Dorsolateral prefrontal cortex (tissue), 120 donors: ENCODE measurements at regions of chr6 and their contacts with region 1.

Region 1: DNA sequence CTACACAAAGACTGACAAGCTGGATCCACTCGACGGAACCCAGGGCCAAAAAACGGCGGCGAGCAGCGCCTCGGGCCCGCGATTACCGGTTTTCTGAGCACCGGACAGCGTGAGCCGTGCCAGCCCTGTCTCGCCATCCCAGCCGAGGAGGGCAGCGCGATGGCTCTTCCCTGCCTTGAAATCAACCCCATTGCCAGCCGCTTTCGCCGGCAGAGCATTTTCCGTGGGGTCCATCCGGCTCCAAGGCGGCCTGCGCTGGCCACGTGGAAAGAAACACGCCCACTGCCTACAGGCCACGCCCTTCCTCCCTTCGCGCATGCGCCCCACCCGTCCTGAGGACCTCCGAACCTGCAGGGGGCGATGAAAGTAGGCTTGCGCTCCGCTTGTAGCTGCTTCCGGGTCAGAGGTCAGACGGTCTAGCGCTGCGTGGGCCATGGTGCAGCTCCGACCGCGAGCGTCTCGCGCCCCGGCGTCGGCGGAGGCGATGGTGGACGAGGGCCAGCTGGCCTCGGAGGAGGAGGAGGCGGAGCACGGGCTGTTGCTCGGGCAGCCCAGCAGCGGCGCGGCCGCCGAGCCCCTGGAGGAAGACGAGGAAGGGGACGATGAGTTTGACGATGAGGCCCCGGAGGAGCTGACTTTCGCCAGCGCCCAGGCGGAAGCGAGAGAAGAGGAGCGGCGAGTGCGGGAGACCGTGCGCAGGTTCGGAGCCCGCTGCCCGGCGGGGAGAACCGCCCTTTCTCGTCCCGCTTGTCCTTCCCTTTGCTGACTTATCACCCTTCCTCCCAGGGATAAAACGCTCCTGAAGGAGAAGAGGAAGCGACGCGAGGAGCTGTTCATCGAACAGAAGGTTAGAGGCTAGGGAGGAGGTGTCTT is at the start of gene NOL7:
- DNase-seq: peak; percentile 93 to 97 (median 96)
- H3K4me3 ChIP-seq: peak within 1 kb of the TSS; percentile 69 to 99 (median 92)
- H3K27ac ChIP-seq: peak within 1 kb of the TSS; percentile 66 to 97 (median 89)
- H3K27me3 ChIP-seq: no peaks in the 10 kb centered on the region
- CTCF ChIP-seq: peak; percentile 81 to 99 (median 95)
- total RNA-seq, gene NOL7: 37.1 to 64.3 (median 48.9) TPM

Region 2: GRCh38 chr6:13454286-13455221 is 160.6 kb before region 1 on chr6:
- intact Hi-C with region 1: loop called in 1 of 2 experiments (anchors 10 kb)
- DNase-seq: peak in 9 of 10 donors; percentile 58 to 91 (median 84)
- H3K4me3 ChIP-seq: peak overlapping the region in 41 of 59 donors; percentile 5 to 49 (median 22)
- H3K27ac ChIP-seq: peak overlapping the region in 55 of 59 donors; percentile 45 to 96 (median 75)
- H3K27me3 ChIP-seq: no peaks in the 10 kb centered on the region
- CTCF ChIP-seq: peak in 54 of 56 donors; percentile 15 to 76 (median 54)

Region 3: GRCh38 chr6:13574149-13574570 is 41.0 kb before region 1 on chr6:
- intact Hi-C with region 1: loop called (anchors 2 kb)
- DNase-seq: peak; percentile 70 to 92 (median 84)
- H3K4me3 ChIP-seq: peak overlapping the region; percentile 46 to 96 (median 87)
- H3K27ac ChIP-seq: peak overlapping the region; percentile 75 to 99 (median 97)
- H3K27me3 ChIP-seq: no peaks in the 10 kb centered on the region
- CTCF ChIP-seq: peak; percentile 26 to 78 (median 60)

Region 4: DNA sequence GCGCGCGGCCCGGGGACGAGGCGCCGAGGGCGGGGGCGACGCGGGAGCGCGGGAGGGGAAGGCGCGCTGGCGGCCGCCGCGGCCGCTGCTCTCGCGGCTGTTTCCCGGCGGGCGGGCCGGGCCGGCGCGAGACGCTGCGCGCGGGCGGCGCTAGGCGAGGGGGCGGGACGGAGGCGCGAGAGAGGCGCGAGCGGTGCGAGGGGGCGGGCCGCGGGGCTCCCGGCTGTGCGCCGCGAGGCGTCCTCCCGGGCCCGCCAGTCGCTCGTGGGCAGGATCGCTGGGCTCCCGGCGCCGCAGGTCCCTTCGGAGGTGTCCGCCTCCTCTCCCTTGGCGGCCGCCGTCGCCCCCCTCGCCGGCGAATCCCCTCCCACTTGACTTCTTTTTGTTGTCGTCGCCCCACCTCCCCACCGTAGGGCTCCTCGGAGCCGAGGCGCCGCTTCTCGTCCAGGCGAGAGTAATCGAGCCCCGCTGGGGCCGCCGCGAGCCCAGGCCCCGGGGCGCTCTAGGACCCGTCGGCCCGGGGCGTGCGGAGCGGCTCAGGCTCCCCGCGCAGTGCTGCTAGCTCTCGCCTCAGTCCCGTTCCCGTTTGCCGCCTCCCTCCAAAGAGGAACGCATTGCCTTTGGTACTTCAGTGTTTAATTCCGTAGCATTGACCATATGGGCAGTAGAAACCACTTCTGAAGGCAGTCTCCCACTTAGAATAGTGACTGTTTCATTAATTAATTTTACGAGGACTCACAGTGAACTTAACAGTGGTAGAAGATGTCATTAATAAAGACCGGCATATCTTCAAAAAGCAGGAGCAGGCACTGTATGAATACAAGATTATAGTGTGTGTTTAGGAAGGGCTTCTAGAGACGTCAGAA is 96.8 kb after region 1 on chr6 and contains the start of gene RANBP9:
- intact Hi-C with region 1: loop called (anchors 1 kb)
- DNase-seq: peak; percentile 62 to 89 (median 81)
- H3K4me3 ChIP-seq: peak within 1 kb of the TSS; percentile 68 to 95 (median 83)
- H3K27ac ChIP-seq: peak within 1 kb of the TSS; percentile 89 to 99 (median 96)
- H3K27me3 ChIP-seq: no peaks in the 10 kb centered on the region
- CTCF ChIP-seq: peak in 19 of 56 donors; percentile 8 to 41 (median 22)
- total RNA-seq, gene RANBP9: 48.7 to 98.0 (median 80.1) TPM

Region 5: DNA sequence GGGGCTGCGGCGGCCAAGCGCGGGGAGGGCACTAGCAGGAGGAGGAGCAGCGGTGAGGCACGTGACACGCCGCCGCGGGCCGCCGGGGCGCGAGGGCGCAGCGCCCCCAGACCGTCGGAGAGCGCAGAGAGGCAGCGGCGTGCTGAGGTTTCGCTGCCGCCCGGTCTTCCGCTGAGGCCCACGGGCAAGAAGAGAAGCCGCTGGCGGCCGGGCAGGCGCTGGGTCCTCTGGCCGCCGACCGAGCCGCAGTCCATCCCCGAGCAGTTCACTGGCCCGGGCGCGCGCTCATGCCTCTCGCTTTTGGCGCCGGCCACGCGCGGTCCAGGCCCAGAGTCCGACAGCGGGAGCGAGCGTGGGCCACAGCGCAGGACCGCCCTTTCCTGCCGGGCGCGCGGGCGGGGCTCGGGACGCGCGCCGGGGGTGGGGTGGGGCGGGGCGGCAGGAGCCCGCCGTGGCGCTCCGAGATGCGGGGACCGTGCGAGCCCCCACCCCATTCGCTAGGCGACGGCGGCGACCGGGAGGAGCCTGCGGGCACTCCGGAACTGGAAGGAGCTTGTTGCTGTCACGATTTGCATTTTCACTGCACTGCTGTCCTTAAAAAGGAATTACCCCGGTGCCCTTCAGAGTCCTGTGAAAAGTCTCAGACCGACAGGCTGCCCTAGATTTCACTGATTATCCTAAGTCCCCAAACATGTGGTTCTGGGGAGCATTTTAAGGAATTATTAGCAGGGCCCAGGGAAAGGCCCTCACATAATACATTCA is 199.2 kb after region 1 on chr6 and contains the start of gene MCUR1:
- intact Hi-C with region 1: loop called (anchors 2 kb)
- DNase-seq: peak; percentile 69 to 91 (median 82)
- H3K4me3 ChIP-seq: peak within 1 kb of the TSS; percentile 66 to 99 (median 92)
- H3K27ac ChIP-seq: peak within 1 kb of the TSS; percentile 60 to 99 (median 97)
- H3K27me3 ChIP-seq: no peaks in the 10 kb centered on the region
- CTCF ChIP-seq: peak in 53 of 56 donors; percentile 29 to 77 (median 52)
- total RNA-seq, gene MCUR1: 22.6 to 50.0 (median 35.4) TPM

Region 6: GRCh38 chr6:13979284-13980171 is 364.4 kb after region 1 on chr6:
- intact Hi-C with region 1: no loop called
- DNase-seq: no peak
- H3K4me3 ChIP-seq: no peak overlapping the region
- H3K27ac ChIP-seq: no peak overlapping the region
- H3K27me3 ChIP-seq: peaks cover 0 to 5% (median 0%) of the 10 kb centered on the region in 45 donors
- CTCF ChIP-seq: no peak